ENCODE measurements at regions of chr7 and their contacts with region 1.

Region 1: GRCh38 chr7:93374345-93374940 is 142.3 kb downstream of the VPS50 start:
- DNase-seq: no peak
- H3K4me3 ChIP-seq: no peak overlapping the region
- H3K27ac ChIP-seq: no peak overlapping the region
- H3K4me1 ChIP-seq: no peaks in the 10 kb centered on the region
- H3K27me3 ChIP-seq: no peaks in the 10 kb centered on the region
- CTCF ChIP-seq: peak; percentile 78

Region 2: GRCh38 chr7:93031795-93032194 is 342.6 kb before region 1 on chr7:
- CTCF ChIA-PET with region 1: interaction called, 15 read pairs
- POLR2A ChIA-PET with region 1: no interaction called
- intact Hi-C with region 1: no loop called
- DNase-seq: no peak
- H3K4me3 ChIP-seq: no peak overlapping the region
- H3K27ac ChIP-seq: no peak overlapping the region
- H3K4me1 ChIP-seq: no peaks in the 10 kb centered on the region
- H3K27me3 ChIP-seq: no peaks in the 10 kb centered on the region
- CTCF ChIP-seq: no peak

Region 3: DNA sequence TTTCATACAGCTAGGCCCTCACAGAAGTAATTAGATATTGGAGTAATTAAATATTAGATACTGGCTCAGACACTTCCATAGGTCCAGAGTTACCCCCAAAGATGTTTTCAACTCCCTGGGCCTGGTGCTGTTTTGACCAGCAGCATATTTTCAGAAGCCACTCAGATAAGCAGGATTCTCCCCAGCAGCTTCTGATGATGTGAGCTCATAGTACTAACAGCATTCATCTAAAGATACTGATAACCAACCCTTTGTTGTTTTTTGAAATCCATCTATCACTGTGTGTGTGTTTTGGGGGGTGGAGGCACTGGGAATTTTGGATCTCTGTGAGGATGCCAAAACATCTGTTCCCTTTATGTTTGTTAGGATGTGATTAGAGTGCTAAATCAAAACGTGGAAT is 89.5 kb before region 1 on chr7:
- CTCF ChIA-PET with region 1: no interaction called
- POLR2A ChIA-PET with region 1: interaction called, 11 read pairs
- intact Hi-C with region 1: no loop called
- DNase-seq: no peak
- H3K4me3 ChIP-seq: no peak overlapping the region
- H3K27ac ChIP-seq: no peak overlapping the region
- H3K4me1 ChIP-seq: no peaks in the 10 kb centered on the region
- H3K27me3 ChIP-seq: no peaks in the 10 kb centered on the region
- CTCF ChIP-seq: no peak

Measured in PC-9 (cell line).